IMR-90 (cell line): ENCODE measurements at regions of chr3 and their contacts with region 1.

Region 1: GRCh38 chr3:125055913-125056745 is at the start of gene HEG1:
- DNase-seq: peak; percentile 77
- ATAC-seq: peak; percentile 73
- H3K4me3 ChIP-seq: peak within 1 kb of the TSS; percentile 96
- H3K27ac ChIP-seq: peak within 1 kb of the TSS; percentile 94
- H3K4me1 ChIP-seq: peaks cover 32% of the 10 kb centered on the region
- H3K27me3 ChIP-seq: no peaks in the 10 kb centered on the region
- CTCF ChIP-seq: no peak
- POLR2A ChIP-seq: peak; percentile 55; the same call in 1 of the 2 replicates
- RAD21 ChIP-seq: no peak
- total RNA-seq, gene HEG1: 23.9 and 25.6 TPM in 2 replicates

Region 2: GRCh38 chr3:125011941-125012340 is 44.2 kb before region 1 on chr3:
- CTCF ChIA-PET with region 1: no interaction called
- POLR2A ChIA-PET with region 1: no interaction called
- dilution Hi-C with region 1: no loop called
- in situ Hi-C with region 1: no loop called
- intact Hi-C with region 1: loop called (anchors 1 kb)
- DNase-seq: peak; percentile 40
- ATAC-seq: peak; percentile 22; the same call in 1 of the 2 replicates
- H3K4me3 ChIP-seq: no peak overlapping the region
- H3K27ac ChIP-seq: no peak overlapping the region
- H3K4me1 ChIP-seq: peaks cover 4% of the 10 kb centered on the region; the same call in 1 of the 2 replicates
- H3K27me3 ChIP-seq: no peaks in the 10 kb centered on the region
- CTCF ChIP-seq: no peak
- POLR2A ChIP-seq: no peak
- RAD21 ChIP-seq: no peak

Region 3: GRCh38 chr3:125165189-125165947 is 109.2 kb after region 1 on chr3:
- CTCF ChIA-PET with region 1: interaction called, 3 read pairs
- POLR2A ChIA-PET with region 1: no interaction called
- dilution Hi-C with region 1: no loop called
- in situ Hi-C with region 1: no loop called
- intact Hi-C with region 1: loop called (anchors 1 kb)
- DNase-seq: peak; percentile 35
- ATAC-seq: peak; percentile 77
- H3K4me3 ChIP-seq: no peak overlapping the region
- H3K27ac ChIP-seq: no peak overlapping the region
- H3K4me1 ChIP-seq: peaks cover 20% of the 10 kb centered on the region
- H3K27me3 ChIP-seq: no peaks in the 10 kb centered on the region
- CTCF ChIP-seq: peak; percentile 61
- POLR2A ChIP-seq: no peak
- RAD21 ChIP-seq: peak; percentile 65

Region 4: DNA sequence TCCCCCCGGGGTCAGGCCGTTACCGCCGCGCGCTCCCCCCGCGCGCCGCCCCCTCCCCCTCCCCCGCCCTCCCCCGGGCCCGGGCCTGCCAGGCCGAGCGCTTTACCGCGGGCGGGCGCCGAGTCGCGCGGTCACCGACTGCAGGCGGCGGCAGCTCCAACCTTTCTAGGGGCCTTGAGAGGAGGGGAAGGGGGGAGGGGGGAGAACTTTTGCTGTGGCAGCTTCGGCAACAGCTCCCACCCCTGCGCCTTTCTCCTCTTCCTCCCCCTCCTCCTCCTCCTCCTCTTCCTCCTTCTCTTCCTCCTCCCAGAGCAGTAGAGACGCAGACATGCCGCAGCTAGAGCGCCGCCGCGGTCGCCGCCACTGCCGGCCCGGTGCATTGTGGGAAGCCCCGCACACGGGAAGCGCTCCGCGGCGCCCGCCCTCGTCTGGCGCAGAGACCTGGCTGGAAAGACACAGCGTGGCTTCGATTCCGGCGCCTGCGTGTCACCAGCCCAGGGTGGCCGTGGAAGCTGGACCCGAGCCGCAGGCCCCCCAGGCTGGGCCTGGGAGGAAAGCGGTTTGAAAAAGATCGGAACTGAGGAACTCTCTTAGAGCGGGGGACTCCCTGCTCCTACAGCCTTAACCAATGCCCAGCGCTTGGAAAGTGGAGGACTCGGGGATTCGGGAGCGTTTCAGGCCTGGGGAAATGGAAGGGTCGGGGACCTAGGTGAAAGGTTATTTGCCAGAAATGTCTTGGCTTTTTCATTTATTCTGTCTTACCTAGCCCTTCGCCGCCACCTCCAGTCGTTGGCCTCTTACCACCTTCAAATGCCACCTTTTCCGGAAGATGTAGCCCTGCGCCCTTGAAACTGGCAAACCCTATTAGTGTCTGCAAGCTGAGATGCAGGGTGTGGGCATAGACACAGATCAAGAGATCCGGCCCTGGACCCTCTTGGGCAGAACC is 319.1 kb after region 1 on chr3 and contains the start of gene ZNF148:
- CTCF ChIA-PET with region 1: no interaction called
- POLR2A ChIA-PET with region 1: no interaction called
- dilution Hi-C with region 1: no loop called
- in situ Hi-C with region 1: no loop called
- intact Hi-C with region 1: loop called (anchors 2 kb)
- DNase-seq: peak; percentile 84
- ATAC-seq: peak; percentile 95
- H3K4me3 ChIP-seq: peak within 1 kb of the TSS; percentile 98
- H3K27ac ChIP-seq: peak within 1 kb of the TSS; percentile 99
- H3K4me1 ChIP-seq: peaks cover 5% of the 10 kb centered on the region
- H3K27me3 ChIP-seq: no peaks in the 10 kb centered on the region
- CTCF ChIP-seq: 0 out of 2 replicates have a peak, but pooled peaks have one; percentile 11
- POLR2A ChIP-seq: peak; percentile 84
- RAD21 ChIP-seq: no peak
- total RNA-seq, gene ZNF148: 57.8 and 65.2 TPM in 2 replicates

Region 5: GRCh38 chr3:125585595-125586223 is 529.6 kb after region 1 on chr3:
- CTCF ChIA-PET with region 1: no interaction called
- POLR2A ChIA-PET with region 1: no interaction called
- dilution Hi-C with region 1: no loop called
- in situ Hi-C with region 1: no loop called
- intact Hi-C with region 1: loop called (anchors 5 kb)
- DNase-seq: peak; percentile 82
- ATAC-seq: peak; percentile 93
- H3K4me3 ChIP-seq: no peak overlapping the region
- H3K27ac ChIP-seq: no peak overlapping the region
- H3K4me1 ChIP-seq: no peaks in the 10 kb centered on the region
- H3K27me3 ChIP-seq: no peaks in the 10 kb centered on the region
- CTCF ChIP-seq: peak; percentile 93
- POLR2A ChIP-seq: peak; percentile 53; the same call in 1 of the 2 replicates
- RAD21 ChIP-seq: peak; percentile 96